ENCODE measurements at regions of chr1 and their contacts with region 1.

Region 1: GRCh38 chr1:96721416-96722160 is at the start of gene PTBP2:
- DNase-seq: peak; percentile 85
- ATAC-seq: peak; percentile 91
- H3K4me3 Mint-ChIP-seq: peak within 1 kb of the TSS; percentile 94
- H3K27ac Mint-ChIP-seq: peak within 1 kb of the TSS; percentile 93
- H3K4me1 Mint-ChIP-seq: peaks cover 26% of the 10 kb centered on the region
- H3K27me3 Mint-ChIP-seq: no peaks in the 10 kb centered on the region
- CTCF ChIP-seq: no peak
- total RNA-seq, gene PTBP2: 17.6 and 18.6 TPM in 2 replicates

Region 2: GRCh38 chr1:95072532-95073419 is 1648.8 kb before region 1 on chr1 and contains the start of gene ALG14:
- CTCF ChIA-PET with region 1: no interaction called
- POLR2A ChIA-PET with region 1: no interaction called
- intact Hi-C with region 1: loop called (anchors 2 kb)
- DNase-seq: peak; percentile 88
- ATAC-seq: peak; percentile 96
- H3K4me3 Mint-ChIP-seq: peak within 1 kb of the TSS; percentile 100
- H3K27ac Mint-ChIP-seq: peak within 1 kb of the TSS; percentile 99
- H3K4me1 Mint-ChIP-seq: peaks cover 20% of the 10 kb centered on the region
- H3K27me3 Mint-ChIP-seq: peaks cover 3% of the 10 kb centered on the region
- CTCF ChIP-seq: no peak
- total RNA-seq, gene ALG14: 3.7 and 7.5 TPM in 2 replicates

Region 3: GRCh38 chr1:96080925-96081324 is 640.7 kb before region 1 on chr1:
- CTCF ChIA-PET with region 1: no interaction called
- POLR2A ChIA-PET with region 1: no interaction called
- intact Hi-C with region 1: no loop called
- DNase-seq: no peak
- ATAC-seq: no peak
- H3K4me3 Mint-ChIP-seq: no peak overlapping the region
- H3K27ac Mint-ChIP-seq: no peak overlapping the region
- H3K4me1 Mint-ChIP-seq: no peaks in the 10 kb centered on the region
- H3K27me3 Mint-ChIP-seq: no peaks in the 10 kb centered on the region
- CTCF ChIP-seq: no peak

Region 4: DNA sequence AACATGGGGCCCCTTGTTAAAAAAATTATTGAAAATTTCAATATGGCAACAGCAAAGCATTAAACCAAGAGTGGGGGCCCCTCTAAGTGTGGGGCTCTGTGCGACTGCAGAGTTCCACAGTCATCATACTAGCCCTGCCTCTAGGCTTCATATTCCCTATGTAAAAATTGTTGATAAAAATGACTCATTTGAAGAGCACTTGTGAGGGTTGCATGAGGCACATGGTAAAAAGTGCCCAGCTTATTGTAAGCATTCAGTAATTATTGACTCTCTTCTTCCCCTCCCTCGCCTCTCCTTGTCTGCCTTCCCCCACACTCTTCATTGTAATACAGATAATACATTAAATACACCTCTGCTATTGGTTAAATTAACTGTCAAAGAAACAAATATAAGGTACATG is 86.7 kb before region 1 on chr1:
- CTCF ChIA-PET with region 1: no interaction called
- POLR2A ChIA-PET with region 1: no interaction called
- intact Hi-C with region 1: no loop called
- DNase-seq: no peak
- ATAC-seq: no peak
- H3K4me3 Mint-ChIP-seq: no peak overlapping the region
- H3K27ac Mint-ChIP-seq: no peak overlapping the region
- H3K4me1 Mint-ChIP-seq: no peaks in the 10 kb centered on the region
- H3K27me3 Mint-ChIP-seq: no peaks in the 10 kb centered on the region
- CTCF ChIP-seq: no peak

Region 5: DNA sequence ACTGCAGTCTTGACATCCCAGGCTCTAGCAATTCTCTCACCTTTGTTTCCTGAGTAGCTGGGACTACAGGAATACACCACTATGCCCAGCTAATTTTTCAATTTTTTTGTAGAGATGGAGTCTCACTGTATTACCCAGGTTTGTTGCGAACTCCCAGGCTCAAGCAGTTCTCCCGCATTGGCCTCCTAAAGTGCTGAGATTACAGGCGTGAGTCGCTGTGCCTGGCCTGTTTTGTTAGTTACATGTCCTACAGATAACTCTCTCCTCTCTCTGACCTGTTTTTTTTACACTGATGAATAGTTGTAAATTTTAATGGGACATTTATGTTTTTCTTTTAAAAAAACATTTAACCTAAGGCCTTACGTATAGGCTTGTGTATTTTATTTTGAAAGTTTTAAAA is 19.7 kb after region 1 on chr1:
- CTCF ChIA-PET with region 1: no interaction called
- POLR2A ChIA-PET with region 1: interaction called, 12 read pairs
- intact Hi-C with region 1: loop called (anchors 2 kb)
- DNase-seq: no peak
- ATAC-seq: no peak
- H3K4me3 Mint-ChIP-seq: no peak overlapping the region
- H3K27ac Mint-ChIP-seq: no peak overlapping the region
- H3K4me1 Mint-ChIP-seq: peaks cover 38% of the 10 kb centered on the region
- H3K27me3 Mint-ChIP-seq: no peaks in the 10 kb centered on the region
- CTCF ChIP-seq: no peak

Region 6: DNA sequence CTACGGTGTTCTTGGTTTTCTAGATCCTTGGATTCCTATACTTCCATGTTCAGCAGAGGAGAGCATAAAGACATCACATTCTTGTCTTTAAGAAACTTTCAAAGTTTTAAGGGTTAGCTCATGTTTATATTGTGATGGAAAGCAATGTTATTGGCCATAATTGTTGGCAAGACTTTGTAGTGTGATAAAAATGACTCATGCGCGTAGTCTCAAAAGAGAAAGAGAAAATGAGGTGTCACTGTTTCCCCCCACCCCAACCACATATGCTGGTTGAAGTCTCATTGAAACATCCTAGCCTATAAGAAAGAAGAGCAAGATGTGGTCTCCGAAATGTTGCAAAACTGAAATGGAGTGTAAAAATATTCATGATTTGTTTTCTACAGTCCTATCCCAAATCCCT is 348.8 kb after region 1 on chr1:
- CTCF ChIA-PET with region 1: no interaction called
- POLR2A ChIA-PET with region 1: no interaction called
- intact Hi-C with region 1: no loop called
- DNase-seq: no peak
- ATAC-seq: no peak
- H3K4me3 Mint-ChIP-seq: no peak overlapping the region
- H3K27ac Mint-ChIP-seq: no peak overlapping the region
- H3K4me1 Mint-ChIP-seq: no peaks in the 10 kb centered on the region
- H3K27me3 Mint-ChIP-seq: no peaks in the 10 kb centered on the region
- CTCF ChIP-seq: no peak

Region 7: DNA sequence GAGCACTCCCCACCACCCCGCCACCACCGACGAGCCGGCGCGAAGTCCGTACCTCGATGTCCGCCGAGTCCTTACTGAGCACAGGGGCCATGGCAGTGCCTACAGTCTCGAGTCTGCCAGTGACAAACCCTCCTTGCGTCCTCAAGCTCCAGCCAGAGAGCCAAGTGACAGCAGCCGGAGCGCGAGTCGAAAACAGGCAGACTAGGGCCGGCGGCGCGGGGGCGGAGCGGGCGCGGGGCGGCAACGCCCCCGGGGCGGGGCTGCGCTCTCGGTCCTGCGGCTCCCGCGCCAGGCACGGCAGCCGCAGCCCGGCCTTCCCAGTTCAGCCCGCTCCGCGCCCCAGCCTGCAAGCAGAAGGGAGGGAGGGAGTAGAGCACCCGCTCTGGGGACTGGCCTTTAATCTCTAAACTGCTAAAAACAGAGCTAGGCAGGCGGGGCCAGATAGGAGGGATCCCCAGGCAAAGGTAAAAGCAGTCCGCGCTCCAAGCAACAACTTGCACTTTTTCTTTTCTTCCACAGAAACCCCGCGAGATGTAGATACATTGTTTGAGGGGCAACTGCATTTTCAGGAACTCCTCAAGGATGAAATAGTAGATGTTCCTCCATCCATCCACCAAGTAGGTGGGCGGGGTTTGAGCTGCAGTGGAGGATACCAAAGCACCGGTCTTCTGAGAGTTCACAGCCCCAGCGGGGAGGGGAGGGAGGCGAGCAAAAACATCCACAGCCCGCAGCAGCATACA is 1199.4 kb after region 1 on chr1 and contains the start of gene DPYD:
- CTCF ChIA-PET with region 1: no interaction called
- POLR2A ChIA-PET with region 1: no interaction called
- intact Hi-C with region 1: loop called (anchors 2 kb)
- DNase-seq: peak; percentile 80
- ATAC-seq: peak; percentile 89
- H3K4me3 Mint-ChIP-seq: peak within 1 kb of the TSS; percentile 93
- H3K27ac Mint-ChIP-seq: peak within 1 kb of the TSS; percentile 89
- H3K4me1 Mint-ChIP-seq: peaks cover 22% of the 10 kb centered on the region
- H3K27me3 Mint-ChIP-seq: no peaks in the 10 kb centered on the region
- CTCF ChIP-seq: no peak
- total RNA-seq, gene DPYD: 10.3 and 12.6 TPM in 2 replicates

Measured in activated B cell treated with CpG ODN at 0.5 μM for 24 hours (primary cell).